IMR-90 (cell line): ENCODE measurements at regions of chr7 and their contacts with region 1.

Region 1: GRCh38 chr7:95476904-95477594 is 8.7 kb upstream of the ASB4 start:
- DNase-seq: peak; percentile 69
- ATAC-seq: peak; percentile 87
- H3K4me3 ChIP-seq: no peak overlapping the region
- H3K27ac ChIP-seq: no peak overlapping the region
- H3K4me1 ChIP-seq: no peaks in the 10 kb centered on the region
- H3K27me3 ChIP-seq: peaks cover 16% of the 10 kb centered on the region
- CTCF ChIP-seq: peak; percentile 80
- POLR2A ChIP-seq: no peak
- RAD21 ChIP-seq: peak; percentile 82

Region 2: GRCh38 chr7:94449148-94449725 is 1027.8 kb before region 1 on chr7:
- CTCF ChIA-PET with region 1: interaction called, 12 read pairs
- POLR2A ChIA-PET with region 1: no interaction called
- dilution Hi-C with region 1: no loop called
- in situ Hi-C with region 1: loop called (anchors 10 kb)
- intact Hi-C with region 1: loop called (anchors 1 kb)
- DNase-seq: peak; percentile 55
- ATAC-seq: peak; percentile 67
- H3K4me3 ChIP-seq: no peak overlapping the region
- H3K27ac ChIP-seq: no peak overlapping the region
- H3K4me1 ChIP-seq: peaks cover 1% of the 10 kb centered on the region; the same call in 1 of the 2 replicates
- H3K27me3 ChIP-seq: peaks cover 2% of the 10 kb centered on the region
- CTCF ChIP-seq: peak; percentile 76
- POLR2A ChIP-seq: no peak
- RAD21 ChIP-seq: peak; percentile 78

Region 3: GRCh38 chr7:95190515-95190914 is 286.5 kb before region 1 on chr7:
- CTCF ChIA-PET with region 1: no interaction called
- POLR2A ChIA-PET with region 1: no interaction called
- dilution Hi-C with region 1: no loop called
- in situ Hi-C with region 1: loop called (anchors 10 kb)
- intact Hi-C with region 1: loop called (anchors 2 kb)
- DNase-seq: no peak
- ATAC-seq: no peak
- H3K4me3 ChIP-seq: no peak overlapping the region
- H3K27ac ChIP-seq: no peak overlapping the region
- H3K4me1 ChIP-seq: no peaks in the 10 kb centered on the region
- H3K27me3 ChIP-seq: no peaks in the 10 kb centered on the region
- CTCF ChIP-seq: no peak
- POLR2A ChIP-seq: no peak
- RAD21 ChIP-seq: no peak

Region 4: DNA sequence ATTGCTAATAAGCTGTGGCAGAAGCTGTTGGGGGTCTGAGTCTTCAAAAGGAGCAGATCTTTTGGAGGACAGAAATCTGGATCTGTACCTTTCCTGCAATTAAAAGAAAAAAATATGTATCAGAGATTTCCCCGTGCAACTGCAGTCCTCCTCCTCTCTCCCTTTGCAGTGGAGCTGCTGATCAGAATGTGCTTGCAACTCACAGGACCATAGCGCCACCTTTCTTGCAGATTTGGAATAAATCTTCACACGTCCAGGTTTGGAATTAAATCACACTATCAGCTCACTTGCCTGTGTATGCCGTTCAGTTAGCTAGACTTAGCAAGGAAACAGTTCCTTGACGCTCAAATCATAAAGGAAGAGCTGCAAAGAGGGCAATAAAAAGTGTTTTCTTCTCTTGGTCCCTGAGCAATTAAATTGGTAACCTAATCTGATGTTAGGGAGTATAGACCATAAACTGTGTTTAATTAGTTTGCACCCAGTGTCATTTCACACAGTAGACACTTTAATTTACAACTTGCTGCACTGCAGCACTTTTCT is 230.1 kb before region 1 on chr7:
- CTCF ChIA-PET with region 1: interaction called, 3 read pairs
- POLR2A ChIA-PET with region 1: no interaction called
- dilution Hi-C with region 1: no loop called
- in situ Hi-C with region 1: no loop called
- intact Hi-C with region 1: loop called (anchors 5 kb)
- DNase-seq: peak; percentile 62
- ATAC-seq: peak; percentile 76
- H3K4me3 ChIP-seq: no peak overlapping the region
- H3K27ac ChIP-seq: no peak overlapping the region
- H3K4me1 ChIP-seq: no peaks in the 10 kb centered on the region
- H3K27me3 ChIP-seq: peaks cover 4% of the 10 kb centered on the region
- CTCF ChIP-seq: peak; percentile 69
- POLR2A ChIP-seq: no peak
- RAD21 ChIP-seq: peak; percentile 72